A549 (cell line): ENCODE measurements at regions of chr3 and their contacts with region 1.

Region 1: DNA sequence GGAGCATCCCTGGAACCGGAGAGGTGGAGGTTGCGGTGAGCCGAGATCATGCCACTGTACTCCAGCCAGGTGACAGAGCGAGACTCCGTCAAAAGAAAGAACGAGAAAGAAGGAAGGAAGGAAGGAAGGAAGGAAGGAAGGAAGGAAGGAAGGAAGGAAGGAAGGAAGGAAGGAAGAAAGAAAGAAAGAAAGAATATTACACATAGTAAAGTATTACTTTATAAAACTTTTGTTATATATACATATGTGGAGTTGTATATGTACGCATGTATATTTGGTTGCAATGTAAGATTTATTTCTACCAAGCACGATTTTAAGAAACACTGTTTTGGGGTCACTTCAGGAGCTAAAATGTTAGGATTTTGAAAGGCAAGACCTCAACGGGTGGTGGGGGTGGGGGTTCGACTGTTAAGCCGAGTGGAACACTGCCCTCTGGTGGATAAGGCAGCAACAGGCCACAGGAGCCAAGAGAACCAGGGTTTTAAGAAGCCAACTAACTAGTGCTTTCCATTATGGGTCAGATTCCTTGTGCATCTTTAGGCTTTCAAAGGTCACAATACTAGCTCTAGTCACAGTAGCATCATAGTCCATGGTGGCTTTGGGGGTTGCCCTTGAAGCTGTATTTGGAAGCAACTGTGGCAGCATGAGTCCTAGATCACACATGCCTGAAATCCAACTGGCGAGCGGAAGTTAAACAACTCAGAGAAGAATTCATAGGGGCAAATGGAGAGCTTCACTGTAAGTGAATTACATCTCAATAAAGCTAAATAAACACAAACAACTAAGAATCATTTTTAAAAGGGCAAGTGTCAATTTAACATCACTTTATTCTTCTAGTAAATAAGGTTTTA is 22.5 kb downstream of the GLB1 start:
- DNase-seq: peak; percentile 76 to 93
- ATAC-seq: peak; percentile 85 to 94; a peak in 5 of 6 replicates
- H3K4me3 ChIP-seq: no peak overlapping the region
- H3K27ac ChIP-seq: no peak overlapping the region
- H3K4me1 ChIP-seq: peaks cover 5% of the 10 kb centered on the region; the same call in 1 of the 3 replicates
- CTCF ChIP-seq: peak; percentile 82
- EP300 ChIP-seq: no peak
- POLR2A ChIP-seq: no peak
- RAD21 ChIP-seq: peak; percentile 67 to 75

Region 2: GRCh38 chr3:32973982-32974381 is 100.5 kb before region 1 on chr3:
- CTCF ChIA-PET with region 1: interaction called, 15 read pairs
- POLR2A ChIA-PET with region 1: no interaction called
- DNase-seq: no peak
- ATAC-seq: no peak
- H3K4me3 ChIP-seq: no peak overlapping the region
- H3K27ac ChIP-seq: no peak overlapping the region
- H3K4me1 ChIP-seq: peaks cover 12% of the 10 kb centered on the region
- CTCF ChIP-seq: no peak
- EP300 ChIP-seq: no peak
- POLR2A ChIP-seq: no peak
- RAD21 ChIP-seq: no peak

Region 3: GRCh38 chr3:33057320-33058298 is 16.8 kb before region 1 on chr3:
- CTCF ChIA-PET with region 1: interaction called, 57 read pairs
- POLR2A ChIA-PET with region 1: no interaction called
- DNase-seq: no peak
- ATAC-seq: no peak
- H3K4me3 ChIP-seq: no peak overlapping the region
- H3K27ac ChIP-seq: no peak overlapping the region
- H3K4me1 ChIP-seq: no peaks in the 10 kb centered on the region
- CTCF ChIP-seq: no peak
- EP300 ChIP-seq: no peak
- POLR2A ChIP-seq: no peak
- RAD21 ChIP-seq: no peak

Region 4: GRCh38 chr3:33089515-33089914 is 15.1 kb after region 1 on chr3:
- CTCF ChIA-PET with region 1: interaction called, 48 read pairs
- POLR2A ChIA-PET with region 1: no interaction called
- DNase-seq: no peak
- ATAC-seq: no peak
- H3K4me3 ChIP-seq: no peak overlapping the region
- H3K27ac ChIP-seq: no peak overlapping the region
- H3K4me1 ChIP-seq: no peaks in the 10 kb centered on the region
- CTCF ChIP-seq: no peak
- EP300 ChIP-seq: no peak
- POLR2A ChIP-seq: no peak
- RAD21 ChIP-seq: no peak